ENCODE measurements at regions of chr13 and their contacts with region 1.

Region 1: GRCh38 chr13:104045907-104046306 is 979.7 kb upstream of the SLC10A2 start:
- DNase-seq: no peak
- H3K4me3 Mint-ChIP-seq: no peak overlapping the region
- H3K27ac Mint-ChIP-seq: no peak overlapping the region
- H3K4me1 Mint-ChIP-seq: no peaks in the 10 kb centered on the region
- H3K27me3 Mint-ChIP-seq: no peaks in the 10 kb centered on the region
- CTCF ChIP-seq: no peak

Region 2: GRCh38 chr13:103634066-103634465 is 411.8 kb before region 1 on chr13:
- CTCF ChIA-PET with region 1: no interaction called
- POLR2A ChIA-PET with region 1: no interaction called
- intact Hi-C with region 1: loop called (anchors 5 kb)
- DNase-seq: no peak
- H3K4me3 Mint-ChIP-seq: no peak overlapping the region
- H3K27ac Mint-ChIP-seq: no peak overlapping the region
- H3K4me1 Mint-ChIP-seq: no peaks in the 10 kb centered on the region
- H3K27me3 Mint-ChIP-seq: no peaks in the 10 kb centered on the region
- CTCF ChIP-seq: no peak

Region 3: DNA sequence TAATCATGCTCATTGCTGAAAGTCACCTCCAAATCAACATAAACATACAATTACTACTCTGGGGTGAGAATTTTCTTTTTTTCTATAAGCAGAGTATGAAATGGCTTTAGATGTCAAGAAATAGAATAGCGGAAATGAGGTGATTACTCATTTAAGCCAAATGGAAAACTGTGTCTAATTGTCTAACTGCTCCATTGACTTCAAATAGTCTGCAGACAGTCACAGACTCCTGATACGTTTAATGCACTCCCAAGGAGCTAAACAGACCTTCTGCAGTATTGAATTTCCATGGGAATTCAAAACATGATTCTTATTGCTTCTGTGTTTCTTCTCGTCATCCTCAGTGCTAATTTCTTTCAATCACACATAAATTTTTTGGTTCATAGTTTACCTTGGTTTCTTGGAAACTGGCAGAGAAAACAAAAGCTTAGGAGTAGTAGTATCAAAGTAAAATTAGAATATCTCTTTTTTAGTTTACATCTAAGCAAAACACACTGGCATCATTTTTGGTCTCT is 114.5 kb before region 1 on chr13:
- CTCF ChIA-PET with region 1: no interaction called
- POLR2A ChIA-PET with region 1: no interaction called
- intact Hi-C with region 1: no loop called
- DNase-seq: no peak
- H3K4me3 Mint-ChIP-seq: no peak overlapping the region
- H3K27ac Mint-ChIP-seq: no peak overlapping the region
- H3K4me1 Mint-ChIP-seq: no peaks in the 10 kb centered on the region
- H3K27me3 Mint-ChIP-seq: no peaks in the 10 kb centered on the region
- CTCF ChIP-seq: no peak

Region 4: DNA sequence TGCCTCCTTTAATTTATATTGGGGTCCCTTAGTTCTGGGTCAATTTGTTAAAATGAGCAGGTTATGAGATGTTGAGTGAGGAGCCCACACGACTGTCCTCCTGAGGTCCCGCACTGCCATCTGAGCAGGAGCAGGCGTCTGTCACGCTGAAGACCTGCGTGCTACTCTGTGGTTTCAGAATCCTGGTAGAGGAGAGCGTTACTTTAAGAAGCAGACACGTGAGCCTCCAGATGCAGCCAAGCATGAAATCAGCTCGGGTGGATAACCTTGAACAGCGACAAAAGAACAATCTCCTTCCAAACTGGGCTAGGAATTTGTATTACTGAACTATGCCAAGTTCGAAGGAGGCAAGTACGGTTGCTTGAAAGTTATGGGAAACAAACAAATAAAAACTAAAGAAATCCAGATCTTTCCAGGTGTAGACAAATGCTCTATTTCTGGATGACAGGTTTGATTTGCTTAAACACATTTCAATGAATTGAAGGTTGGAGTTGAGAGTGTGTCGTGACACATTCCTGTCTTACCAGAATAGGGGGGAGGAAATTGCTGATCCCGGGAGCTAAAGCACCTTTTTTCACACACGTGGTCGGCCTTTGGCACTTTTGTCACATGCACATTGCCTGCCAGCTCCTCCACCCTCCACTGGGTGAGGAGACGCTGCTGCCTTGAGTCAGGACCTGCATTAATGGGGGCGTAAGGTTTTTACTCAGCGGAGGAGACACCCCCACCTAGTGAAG is 34.2 kb before region 1 on chr13:
- CTCF ChIA-PET with region 1: no interaction called
- POLR2A ChIA-PET with region 1: no interaction called
- intact Hi-C with region 1: no loop called
- DNase-seq: no peak
- H3K4me3 Mint-ChIP-seq: no peak overlapping the region
- H3K27ac Mint-ChIP-seq: no peak overlapping the region
- H3K4me1 Mint-ChIP-seq: peaks cover 16% of the 10 kb centered on the region
- H3K27me3 Mint-ChIP-seq: no peaks in the 10 kb centered on the region
- CTCF ChIP-seq: no peak

Region 5: GRCh38 chr13:104057851-104058250 is 11.9 kb after region 1 on chr13:
- CTCF ChIA-PET with region 1: no interaction called
- POLR2A ChIA-PET with region 1: no interaction called
- intact Hi-C with region 1: no loop called
- DNase-seq: no peak
- H3K4me3 Mint-ChIP-seq: peak overlapping the region; percentile 27
- H3K27ac Mint-ChIP-seq: no peak overlapping the region
- H3K4me1 Mint-ChIP-seq: peaks cover 6% of the 10 kb centered on the region
- H3K27me3 Mint-ChIP-seq: no peaks in the 10 kb centered on the region
- CTCF ChIP-seq: no peak

Region 6: DNA sequence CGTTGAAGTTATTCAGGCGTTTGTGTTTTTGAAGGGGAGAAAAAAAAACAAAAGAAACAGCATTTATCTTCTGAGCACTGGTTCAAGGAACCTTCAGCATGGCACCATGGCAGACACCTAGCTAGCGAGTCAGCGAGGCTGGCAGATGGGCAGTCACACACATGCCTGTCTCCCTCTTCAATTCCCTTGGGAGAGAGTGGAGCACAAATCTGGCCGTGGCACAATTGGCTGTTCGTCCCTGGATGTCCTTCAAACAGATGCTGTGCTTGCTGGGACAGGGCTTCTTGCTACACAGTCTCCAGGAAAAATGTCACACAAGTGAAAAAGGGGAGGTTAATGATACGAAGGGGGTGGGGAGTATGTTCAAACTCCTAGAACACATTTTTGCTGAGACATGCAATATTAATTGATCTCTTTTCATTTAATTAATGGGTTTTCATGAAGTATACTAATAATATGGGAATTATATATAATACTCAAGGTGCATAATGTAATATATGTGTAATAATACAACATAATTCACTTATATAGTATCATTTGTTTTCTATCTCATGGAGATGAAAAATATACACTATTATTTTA is 694.8 kb after region 1 on chr13:
- CTCF ChIA-PET with region 1: no interaction called
- POLR2A ChIA-PET with region 1: no interaction called
- intact Hi-C with region 1: no loop called
- DNase-seq: no peak
- H3K4me3 Mint-ChIP-seq: no peak overlapping the region
- H3K27ac Mint-ChIP-seq: no peak overlapping the region
- H3K4me1 Mint-ChIP-seq: no peaks in the 10 kb centered on the region
- H3K27me3 Mint-ChIP-seq: no peaks in the 10 kb centered on the region
- CTCF ChIP-seq: no peak